ENCODE measurements at regions of chr4 and their contacts with region 1.

Region 1: DNA sequence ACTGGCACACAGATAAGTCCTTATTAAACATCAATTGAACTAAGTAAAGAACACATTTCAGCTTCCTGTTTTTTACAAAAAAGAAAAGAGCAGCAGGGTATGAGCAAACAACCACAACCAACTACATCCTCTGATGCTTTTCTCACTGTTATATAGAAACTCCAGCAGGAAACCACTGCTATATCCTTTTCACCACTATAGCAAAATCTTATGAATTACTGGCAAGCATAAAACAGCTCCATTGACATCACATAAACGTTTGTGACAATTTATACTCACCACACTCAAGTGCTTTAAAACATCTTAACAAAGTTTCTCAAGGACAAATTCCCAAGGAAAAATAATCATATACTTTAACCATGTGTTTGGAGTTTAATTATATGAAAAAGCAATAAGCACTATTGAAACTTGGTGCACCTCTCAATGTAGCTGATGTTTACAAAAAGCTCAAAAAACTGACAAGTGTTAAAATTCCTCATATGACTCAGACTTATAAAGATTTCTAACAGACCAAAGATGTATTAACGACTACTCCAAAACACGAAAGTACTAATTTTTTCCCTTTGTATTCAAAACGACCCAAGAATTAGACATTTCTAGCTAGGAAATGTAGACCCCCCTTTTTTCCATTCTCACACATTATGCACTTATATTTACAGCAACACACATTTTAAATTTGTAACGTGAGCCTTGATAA is 12.9 kb downstream of the GPRIN3 start:
- DNase-seq: peak in 1 of 2 donors; percentile 83
- ATAC-seq: peak; percentile 68 to 85 (median 82)
- H3K4me3 ChIP-seq: no peak overlapping the region
- H3K4me3 Mint-ChIP-seq: peak overlapping the region; percentile 87
- H3K27ac ChIP-seq: peak overlapping the region; percentile 88
- H3K27ac Mint-ChIP-seq: peak overlapping the region in 1 of 2 donors; percentile 96
- H3K4me1 ChIP-seq: peaks cover 47% of the 10 kb centered on the region
- H3K4me1 Mint-ChIP-seq: peaks cover 88 to 89% of the 10 kb centered on the region in 2 donors
- H3K27me3 ChIP-seq: no peaks in the 10 kb centered on the region
- H3K27me3 Mint-ChIP-seq: no peaks in the 10 kb centered on the region
- CTCF ChIP-seq: no peak

Region 2: GRCh38 chr4:88591787-88592599 is 702.7 kb before region 1 on chr4 and contains the start of gene HERC3:
- intact Hi-C with region 1: loop called (anchors 10 kb)
- DNase-seq: peak; percentile 91 to 93
- ATAC-seq: peak; percentile 85 to 97 (median 91)
- H3K4me3 ChIP-seq: peak within 1 kb of the TSS; percentile 100
- H3K4me3 Mint-ChIP-seq: peak within 1 kb of the TSS; percentile 96
- H3K27ac ChIP-seq: peak within 1 kb of the TSS; percentile 90
- H3K27ac Mint-ChIP-seq: peak within 1 kb of the TSS; percentile 91 to 97
- H3K4me1 ChIP-seq: peaks cover 6% of the 10 kb centered on the region
- H3K4me1 Mint-ChIP-seq: peaks cover 29 to 30% of the 10 kb centered on the region in 2 donors
- H3K27me3 ChIP-seq: no peaks in the 10 kb centered on the region
- H3K27me3 Mint-ChIP-seq: no peaks in the 10 kb centered on the region
- CTCF ChIP-seq: no peak
- total RNA-seq, gene HERC3: 59.1 to 85.0 (median 61.9) TPM

Region 3: DNA sequence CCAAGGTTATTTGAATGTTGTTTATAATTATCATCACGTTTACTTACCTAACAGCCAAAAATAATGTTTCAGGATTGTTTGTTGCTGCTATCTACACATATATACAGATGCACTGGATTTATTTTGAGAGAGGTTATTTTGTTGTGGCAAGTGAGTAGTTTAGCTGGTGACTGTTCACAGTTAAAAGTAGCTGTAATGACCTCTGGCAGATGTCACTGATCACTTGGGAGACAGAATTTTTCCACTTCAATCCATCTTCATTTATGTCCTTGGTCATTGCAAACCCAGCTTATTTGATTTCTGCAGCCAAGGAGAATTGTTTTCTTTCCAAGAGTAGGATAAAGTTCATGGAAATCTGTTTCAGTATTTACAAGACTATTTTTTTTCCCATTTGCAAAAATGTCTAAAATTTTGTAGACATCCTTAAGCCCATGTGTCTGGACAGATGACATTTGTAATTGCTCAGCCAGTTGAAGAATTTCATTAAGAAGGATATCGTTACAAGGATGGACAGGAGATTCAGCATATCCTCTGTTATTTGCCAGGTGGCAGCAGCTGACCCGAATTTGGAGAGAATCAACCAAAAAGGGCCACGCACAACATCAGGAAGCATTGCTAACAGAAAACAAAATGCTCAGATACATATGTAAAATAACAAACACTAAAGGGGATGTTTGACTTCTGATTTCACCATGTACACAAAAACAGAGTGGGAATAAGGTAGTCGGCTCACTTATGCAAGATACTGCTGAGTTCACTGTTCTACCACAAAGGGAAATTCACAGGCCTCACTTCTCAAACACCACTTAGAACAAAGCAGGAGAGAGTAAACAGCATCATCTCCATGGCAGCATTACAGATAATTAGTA is 51.6 kb before region 1 on chr4:
- intact Hi-C with region 1: loop called (anchors 2 kb)
- DNase-seq: peak in 1 of 2 donors; percentile 81
- ATAC-seq: peak; percentile 83 to 91 (median 85)
- H3K4me3 ChIP-seq: no peak overlapping the region
- H3K4me3 Mint-ChIP-seq: peak overlapping the region; percentile 61
- H3K27ac ChIP-seq: peak overlapping the region; percentile 68
- H3K27ac Mint-ChIP-seq: peak overlapping the region; percentile 90 to 92
- H3K4me1 ChIP-seq: peaks cover 5% of the 10 kb centered on the region
- H3K4me1 Mint-ChIP-seq: peaks cover 20 to 26% of the 10 kb centered on the region in 2 donors
- H3K27me3 ChIP-seq: no peaks in the 10 kb centered on the region
- H3K27me3 Mint-ChIP-seq: no peaks in the 10 kb centered on the region
- CTCF ChIP-seq: no peak

Region 4: DNA sequence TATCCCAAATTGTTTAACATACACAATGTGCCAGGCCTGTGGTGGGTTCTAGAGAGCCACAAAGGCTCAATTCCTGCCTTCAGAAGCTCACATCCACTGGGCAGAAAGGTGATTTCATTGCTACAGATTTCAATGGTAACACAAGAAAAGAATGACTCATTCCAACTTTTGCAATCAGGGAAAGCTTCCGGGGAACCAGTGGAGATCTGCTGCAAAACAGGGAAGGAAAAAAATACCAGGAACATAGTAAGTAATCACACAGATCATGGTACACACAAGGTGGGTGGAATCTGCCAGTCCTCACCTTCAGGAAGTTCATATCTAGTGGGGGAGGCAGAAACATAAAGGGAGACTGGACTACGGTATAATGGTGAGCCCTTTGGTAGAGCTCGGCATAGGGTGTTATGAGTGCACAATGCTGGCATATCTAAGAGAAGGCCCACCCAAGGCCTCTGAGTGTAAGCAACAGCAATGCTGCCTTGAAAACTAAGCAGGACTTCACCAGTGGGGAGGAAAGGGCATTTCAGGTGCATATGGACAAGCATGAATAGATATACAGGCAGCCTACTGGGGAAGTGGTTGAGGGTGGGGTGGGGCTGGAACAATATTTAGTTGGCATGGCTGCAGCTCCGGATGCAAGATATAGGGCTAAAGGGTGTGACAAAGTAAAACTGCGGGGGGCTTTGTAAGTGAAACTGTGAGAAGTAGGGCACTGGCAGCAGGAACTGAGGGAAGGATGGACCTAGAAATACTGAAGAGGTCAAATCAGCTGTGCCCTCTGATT is 11.3 kb before region 1 on chr4:
- intact Hi-C with region 1: loop called (anchors 1 kb)
- DNase-seq: peak in 1 of 2 donors; percentile 78
- ATAC-seq: peak; percentile 65 to 86 (median 84)
- H3K4me3 ChIP-seq: peak overlapping the region; percentile 12
- H3K4me3 Mint-ChIP-seq: peak overlapping the region; percentile 71
- H3K27ac ChIP-seq: peak overlapping the region; percentile 88
- H3K27ac Mint-ChIP-seq: no peak overlapping the region
- H3K4me1 ChIP-seq: peaks cover 49% of the 10 kb centered on the region
- H3K4me1 Mint-ChIP-seq: peaks cover 56 to 60% of the 10 kb centered on the region in 2 donors
- H3K27me3 ChIP-seq: no peaks in the 10 kb centered on the region
- H3K27me3 Mint-ChIP-seq: no peaks in the 10 kb centered on the region
- CTCF ChIP-seq: no peak

Region 5: GRCh38 chr4:89316931-89317366 is 22.2 kb after region 1 on chr4:
- intact Hi-C with region 1: loop called (anchors 2 kb)
- DNase-seq: peak in 1 of 2 donors; percentile 69
- ATAC-seq: peak; percentile 84 to 89 (median 87)
- H3K4me3 ChIP-seq: no peak overlapping the region
- H3K4me3 Mint-ChIP-seq: peak overlapping the region; percentile 2
- H3K27ac ChIP-seq: peak overlapping the region; percentile 50
- H3K27ac Mint-ChIP-seq: peak overlapping the region; percentile 83 to 85
- H3K4me1 ChIP-seq: peaks cover 11% of the 10 kb centered on the region
- H3K4me1 Mint-ChIP-seq: peaks cover 17% of the 10 kb centered on the region in 2 donors
- H3K27me3 ChIP-seq: no peaks in the 10 kb centered on the region
- H3K27me3 Mint-ChIP-seq: no peaks in the 10 kb centered on the region
- CTCF ChIP-seq: no peak